Posterior cingulate gyrus (tissue), 11 donors: ENCODE measurements at regions of chr19 and their contacts with region 1.

Region 1: DNA sequence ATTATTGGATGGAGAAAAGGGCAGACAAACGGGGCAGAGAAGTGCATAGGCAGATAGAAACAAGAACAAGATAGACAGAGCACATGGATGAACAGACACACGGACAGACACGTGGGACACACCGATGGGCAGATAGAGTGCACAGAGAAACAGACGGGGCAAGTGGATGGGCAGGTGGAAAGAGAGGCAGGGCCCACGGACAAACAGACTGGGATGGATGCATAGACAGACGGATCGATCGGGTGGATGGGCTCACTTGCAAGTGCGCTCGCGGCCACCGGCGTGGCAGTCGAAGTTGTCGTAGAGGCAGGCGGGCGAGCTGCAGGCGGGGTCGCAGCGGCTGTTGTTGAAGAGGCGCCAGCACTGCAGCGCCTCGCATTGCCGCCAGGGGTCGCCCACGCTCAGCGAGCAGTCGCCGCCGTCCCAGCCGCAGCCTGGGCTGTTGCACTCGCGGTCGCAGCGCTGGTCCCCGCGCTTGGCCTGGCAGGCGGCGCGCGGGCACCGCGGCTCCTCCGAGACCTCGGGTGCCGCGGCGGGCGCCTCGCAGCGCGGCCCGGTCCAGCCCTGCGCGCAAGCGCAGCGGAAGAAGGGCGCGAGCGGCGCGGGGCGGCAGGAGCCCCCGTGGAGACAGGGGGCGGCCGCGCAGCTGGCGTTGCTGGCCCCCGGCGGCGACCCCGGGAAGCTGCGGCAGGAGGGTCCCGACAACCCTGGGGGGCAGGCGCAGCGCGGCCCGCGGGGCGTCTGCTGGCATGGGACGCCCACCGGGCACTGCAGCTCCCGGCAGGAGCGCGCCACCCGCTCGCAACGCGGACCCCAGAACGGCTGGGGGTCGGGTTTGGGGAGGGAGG is 23.3 kb downstream of the NOTCH3 start:
- DNase-seq: peak; percentile 66 to 97 (median 78)

Region 2: DNA sequence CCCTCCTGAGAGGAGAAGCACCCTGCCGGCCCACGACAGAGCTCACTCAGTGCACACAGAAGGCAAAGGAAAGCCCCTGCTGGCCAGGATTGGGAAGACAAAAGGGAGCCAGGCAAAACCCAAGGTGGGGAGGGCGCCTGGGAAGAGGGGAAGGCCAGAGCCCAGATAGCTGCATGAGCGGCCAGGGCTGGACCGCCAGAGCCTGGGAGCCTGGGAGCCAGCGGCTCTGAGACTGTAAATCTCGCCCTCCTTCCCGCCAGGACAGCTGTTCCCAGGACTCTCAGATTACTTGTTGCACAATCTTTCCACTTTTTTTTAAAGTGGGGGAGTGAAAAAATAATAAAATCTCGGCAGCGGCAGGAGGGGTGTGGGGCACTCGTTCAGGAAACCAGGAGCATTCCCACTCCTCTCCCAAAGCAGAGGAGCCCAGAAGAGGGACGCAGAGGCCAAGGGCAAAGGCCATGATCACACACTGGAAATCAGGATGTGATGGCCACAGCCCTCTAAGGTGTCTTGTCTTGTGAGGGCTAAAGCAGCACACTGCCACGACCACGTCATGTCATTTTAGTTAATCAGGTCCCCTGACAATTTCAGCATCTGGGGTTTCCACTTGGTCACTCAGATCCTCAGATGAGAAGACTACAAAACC is 74.4 kb after region 1 on chr19:
- intact Hi-C with region 1: loop called (anchors 1 kb)
- DNase-seq: peak in 2 of 10 donors; percentile 79 to 92

Region 3: DNA sequence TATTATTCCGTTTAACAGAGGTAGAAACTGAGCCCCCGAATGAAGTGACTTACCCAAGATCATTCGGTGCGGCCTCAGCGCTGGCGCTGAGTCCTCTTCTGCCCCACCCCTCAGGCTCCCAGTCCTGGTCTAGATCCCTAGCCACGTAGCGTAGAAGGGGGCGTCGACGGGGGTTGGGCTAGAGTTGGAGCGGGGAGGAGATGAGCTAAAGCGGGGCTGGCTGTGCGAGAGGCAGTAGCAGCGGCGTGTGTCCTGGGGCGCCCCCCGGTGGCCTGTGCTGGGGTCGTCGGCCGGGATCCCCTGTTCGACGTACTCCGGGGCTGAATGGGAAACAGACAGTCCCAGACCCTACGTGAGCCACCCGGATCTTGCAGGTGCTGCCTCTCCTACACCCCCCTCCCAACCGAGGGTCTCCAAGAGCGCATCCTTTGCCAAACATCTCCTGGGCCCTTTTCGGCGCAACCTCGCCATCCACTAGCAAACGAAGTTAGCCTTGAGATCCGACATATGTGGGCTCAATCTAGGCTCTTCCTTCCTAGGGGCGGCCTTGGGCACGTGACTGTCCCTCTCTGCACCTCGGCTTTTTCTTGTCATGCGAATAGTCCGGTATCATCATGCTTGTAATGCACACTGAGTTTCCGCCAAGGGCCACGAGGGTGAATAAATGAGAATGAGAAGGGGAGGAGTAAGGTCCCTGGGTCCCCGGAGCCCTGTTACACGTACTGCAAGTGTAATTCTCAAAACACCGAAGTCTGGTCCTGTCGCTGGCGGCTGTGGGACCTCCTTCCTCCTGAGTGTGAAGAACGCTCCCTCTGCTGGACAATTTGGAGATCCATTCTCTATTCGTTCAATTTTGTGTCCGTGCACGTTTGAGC is 378.5 kb after region 1 on chr19:
- intact Hi-C with region 1: loop called (anchors 1 kb)
- DNase-seq: peak; percentile 47 to 95 (median 76)